ENCODE measurements at regions of chr3 and their contacts with region 1.

Region 1: DNA sequence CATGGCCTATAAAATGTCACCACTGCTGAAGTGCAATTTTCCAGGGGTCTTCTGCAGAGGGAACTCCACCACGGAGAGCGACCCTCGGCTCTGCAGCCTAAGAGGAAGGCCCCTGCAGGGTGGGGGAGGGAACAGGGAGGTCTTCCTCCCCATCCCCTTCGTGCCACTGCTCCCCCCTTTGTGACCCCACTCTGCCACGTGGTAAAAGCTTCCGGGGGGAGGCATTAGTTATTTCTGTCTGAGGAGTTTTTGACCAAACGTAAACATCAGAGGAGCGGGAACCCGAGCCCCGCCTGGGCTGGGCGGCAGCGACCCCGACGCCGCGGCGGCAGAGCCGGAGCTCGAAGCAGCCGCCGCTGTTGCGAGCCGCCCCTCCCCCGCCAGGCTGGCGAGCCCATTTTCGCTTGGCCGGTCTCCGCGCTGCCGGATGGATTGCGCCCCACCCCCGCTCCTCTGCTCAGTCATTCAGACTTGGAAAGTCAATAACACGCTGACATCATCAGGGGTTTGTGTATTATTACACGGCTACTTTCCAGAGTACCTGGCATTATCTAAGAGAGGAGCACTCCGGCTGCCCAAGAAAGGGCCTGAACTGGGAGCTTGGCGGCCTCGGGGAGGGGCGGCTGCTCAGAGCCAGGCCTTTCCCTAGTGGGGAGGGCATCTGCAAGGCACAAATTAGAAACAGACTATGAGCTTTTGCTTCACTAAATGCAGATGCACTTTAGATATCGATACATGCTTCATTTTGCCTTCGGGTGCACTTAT is 162.5 kb upstream of the TBL1XR1 start:
- DNase-seq: peak; percentile 96 to 97
- H3K4me3 ChIP-seq: peak overlapping the region; percentile 11
- H3K4me1 ChIP-seq: peaks cover 34% of the 10 kb centered on the region
- H3K27me3 ChIP-seq: no peaks in the 10 kb centered on the region

Region 2: GRCh38 chr3:177050501-177051237 is 309.1 kb before region 1 on chr3:
- in situ Hi-C with region 1: loop called (anchors 25 kb)
- DNase-seq: peak in 1 of 2 experiments; percentile 39
- H3K4me3 ChIP-seq: no peak overlapping the region
- H3K4me1 ChIP-seq: peaks cover 14% of the 10 kb centered on the region
- H3K27me3 ChIP-seq: no peaks in the 10 kb centered on the region

Region 3: GRCh38 chr3:177197041-177197727 is 162.6 kb before region 1 on chr3 and contains the start of gene TBL1XR1:
- in situ Hi-C with region 1: loop called (anchors 5 kb)
- DNase-seq: peak; percentile 91 to 94
- H3K4me3 ChIP-seq: peak within 1 kb of the TSS; percentile 82
- H3K4me1 ChIP-seq: peaks cover 35% of the 10 kb centered on the region
- H3K27me3 ChIP-seq: no peaks in the 10 kb centered on the region

Region 4: DNA sequence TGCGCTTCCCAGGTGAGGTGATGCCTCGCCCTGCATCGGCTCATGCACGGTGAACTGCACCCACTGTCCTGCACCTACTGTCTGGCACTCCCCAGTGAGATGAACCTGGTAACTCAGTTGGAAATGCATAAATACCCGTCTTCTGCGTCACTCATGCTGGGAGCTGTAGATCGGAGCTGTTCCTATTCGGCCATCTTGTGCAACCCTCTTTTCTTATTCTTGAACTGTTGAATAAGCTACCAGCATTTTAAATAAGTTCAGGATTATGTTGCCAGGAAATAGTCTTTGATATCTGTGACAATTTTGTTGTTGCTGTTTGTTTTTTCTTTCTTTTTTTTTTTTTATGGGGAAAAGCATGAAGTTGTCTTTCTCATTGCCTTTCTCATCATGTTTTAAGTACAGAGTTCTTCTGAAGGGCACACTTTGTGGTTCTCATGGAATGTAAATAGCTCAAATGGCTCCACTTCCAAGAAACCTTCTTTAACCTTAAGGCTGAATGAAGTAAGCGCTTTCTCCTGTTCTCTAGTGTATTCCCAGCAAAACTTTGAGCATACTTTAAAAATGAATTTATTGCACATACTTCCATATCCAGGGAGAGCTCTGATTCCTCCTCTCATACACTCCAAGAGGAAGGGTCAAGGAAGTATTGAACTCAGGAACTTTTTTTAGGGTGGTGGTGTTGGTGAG is 305.5 kb after region 1 on chr3:
- in situ Hi-C with region 1: no loop called
- DNase-seq: no peak
- H3K4me3 ChIP-seq: no peak overlapping the region
- H3K4me1 ChIP-seq: no peaks in the 10 kb centered on the region
- H3K27me3 ChIP-seq: no peaks in the 10 kb centered on the region

Measured in HAP-1 (cell line).